ENCODE measurements at regions of chr12 and their contacts with region 1.

Region 1: GRCh38 chr12:79183926-79184325 is 319.4 kb downstream of the SYT1 start:
- DNase-seq: peak; percentile 98
- H3K4me3 ChIP-seq: no peak overlapping the region
- H3K27ac ChIP-seq: peak overlapping the region; percentile 99
- H3K4me1 ChIP-seq: peaks cover 19% of the 10 kb centered on the region
- H3K27me3 ChIP-seq: no peaks in the 10 kb centered on the region
- CTCF ChIP-seq: no peak
- POLR2A ChIP-seq: no peak

Region 2: GRCh38 chr12:78888568-78888967 is 295.4 kb before region 1 on chr12:
- CTCF ChIA-PET with region 1: no interaction called
- POLR2A ChIA-PET with region 1: no interaction called
- dilution Hi-C with region 1: no loop called
- intact Hi-C with region 1: loop called (anchors 2 kb)
- DNase-seq: no peak
- H3K4me3 ChIP-seq: no peak overlapping the region
- H3K27ac ChIP-seq: peak overlapping the region; percentile 11
- H3K4me1 ChIP-seq: peaks cover 29% of the 10 kb centered on the region
- H3K27me3 ChIP-seq: no peaks in the 10 kb centered on the region
- CTCF ChIP-seq: no peak
- POLR2A ChIP-seq: no peak

Region 3: DNA sequence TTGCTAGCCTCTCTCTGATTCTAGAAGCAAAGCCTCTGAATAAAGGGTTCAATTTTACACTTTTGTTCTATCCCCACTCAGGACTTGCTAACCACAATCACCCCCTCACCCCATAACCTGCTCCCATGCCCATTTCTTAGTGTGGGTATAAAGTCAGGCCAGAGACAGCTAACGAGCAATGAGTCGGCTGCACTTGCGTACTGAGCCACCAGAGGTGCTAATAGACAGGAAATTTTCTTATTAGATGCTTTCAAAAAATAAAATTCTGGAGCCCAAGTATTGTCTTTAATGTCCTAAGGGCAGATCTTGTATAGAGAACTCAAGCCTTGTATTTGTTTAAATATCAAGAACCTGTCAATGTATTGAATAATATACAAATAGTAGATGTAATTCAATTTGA is 62.4 kb before region 1 on chr12:
- CTCF ChIA-PET with region 1: no interaction called
- POLR2A ChIA-PET with region 1: no interaction called
- dilution Hi-C with region 1: no loop called
- intact Hi-C with region 1: no loop called
- DNase-seq: peak; percentile 3
- H3K4me3 ChIP-seq: no peak overlapping the region
- H3K27ac ChIP-seq: no peak overlapping the region
- H3K4me1 ChIP-seq: no peaks in the 10 kb centered on the region
- H3K27me3 ChIP-seq: no peaks in the 10 kb centered on the region
- CTCF ChIP-seq: peak; percentile 27 to 32
- POLR2A ChIP-seq: no peak

Region 4: GRCh38 chr12:79155683-79156082 is 28.2 kb before region 1 on chr12:
- CTCF ChIA-PET with region 1: no interaction called
- POLR2A ChIA-PET with region 1: no interaction called
- dilution Hi-C with region 1: no loop called
- intact Hi-C with region 1: no loop called
- DNase-seq: no peak
- H3K4me3 ChIP-seq: no peak overlapping the region
- H3K27ac ChIP-seq: no peak overlapping the region
- H3K4me1 ChIP-seq: no peaks in the 10 kb centered on the region
- H3K27me3 ChIP-seq: no peaks in the 10 kb centered on the region
- CTCF ChIP-seq: no peak
- POLR2A ChIP-seq: no peak

Measured in endothelial cell of umbilical vein (primary cell).